Heart left ventricle (tissue), 16 donors: ENCODE measurements at regions of chr1 and their contacts with region 1.

Region 1: GRCh38 chr1:91684481-91685196 is 184.0 kb downstream of the CDC7 start:
- DNase-seq: peak in 1 of 5 donors; percentile 29
- ATAC-seq: peak in 3 of 4 donors; percentile 40 to 54 (median 45)
- H3K4me3 ChIP-seq: no peak overlapping the region
- H3K27ac ChIP-seq: peak overlapping the region in 6 of 12 donors; percentile 7 to 54 (median 42)
- H3K4me1 ChIP-seq: peaks cover 0 to 52% (median 37%) of the 10 kb centered on the region in 12 donors
- H3K27me3 ChIP-seq: no peaks in the 10 kb centered on the region
- CTCF ChIP-seq: no peak
- POLR2A ChIP-seq: no peak

Region 2: GRCh38 chr1:91609571-91609970 is 75.1 kb before region 1 on chr1:
- intact Hi-C with region 1: loop called in 1 of 10 experiments (anchors 5 kb)
- DNase-seq: no peak
- ATAC-seq: peak in 2 of 4 donors; percentile 23 to 39
- H3K4me3 ChIP-seq: no peak overlapping the region
- H3K27ac ChIP-seq: peak overlapping the region in 1 of 12 donors; percentile 30
- H3K4me1 ChIP-seq: peaks cover 0 to 14% (median 0%) of the 10 kb centered on the region in 12 donors
- H3K27me3 ChIP-seq: no peaks in the 10 kb centered on the region
- CTCF ChIP-seq: no peak
- POLR2A ChIP-seq: no peak